Caco-2 (cell line): ENCODE measurements at regions of chr10 and their contacts with region 1.

Region 1: DNA sequence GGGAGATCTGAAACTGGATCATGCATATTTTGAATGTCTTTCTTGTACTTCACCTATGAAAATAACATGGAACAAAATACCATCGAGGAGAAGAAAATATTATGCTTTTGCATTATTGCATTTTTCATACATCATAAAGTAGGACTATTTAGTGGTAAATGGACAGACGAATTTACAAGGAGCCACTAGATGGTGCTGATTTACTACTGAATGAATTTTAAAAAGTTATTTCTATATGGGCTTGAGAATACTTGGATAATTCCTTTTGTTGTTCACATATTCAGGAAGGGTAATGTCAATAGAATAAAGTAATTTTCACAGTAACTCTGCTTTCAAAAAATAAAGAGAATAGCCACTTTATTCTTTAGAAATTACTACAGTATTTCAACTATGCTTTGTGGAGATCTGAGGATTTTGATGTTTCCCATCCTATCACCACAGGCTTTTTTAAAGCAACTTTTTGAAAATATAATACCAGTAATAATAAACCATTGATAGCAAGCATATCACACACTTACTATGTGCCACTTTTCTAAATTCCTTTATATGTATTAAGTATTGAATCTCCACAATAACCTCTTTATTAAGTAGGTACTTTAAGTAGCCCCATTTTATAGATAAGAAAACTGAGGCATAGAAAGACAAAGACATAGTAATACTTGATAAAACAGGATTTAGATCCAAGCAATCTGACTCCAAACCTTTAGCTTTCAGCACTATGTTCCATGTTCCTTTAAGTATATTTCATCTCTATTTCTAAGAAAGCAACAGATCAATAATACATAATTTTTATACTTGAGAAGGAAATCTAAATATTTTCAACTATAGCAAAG is 38.6 kb downstream of the NEBL start:
- DNase-seq: peak in 1 of 2 experiments; percentile 35
- H3K4me3 ChIP-seq: no peak overlapping the region
- H3K4me3 Mint-ChIP-seq: no peak overlapping the region
- H3K27ac Mint-ChIP-seq: no peak overlapping the region
- H3K4me1 ChIP-seq: no peaks in the 10 kb centered on the region
- H3K4me1 Mint-ChIP-seq: no peaks in the 10 kb centered on the region
- H3K27me3 ChIP-seq: no peaks in the 10 kb centered on the region
- H3K27me3 Mint-ChIP-seq: no peaks in the 10 kb centered on the region
- CTCF ChIP-seq: peak; percentile 55 to 68

Region 2: GRCh38 chr10:19412531-19412930 is 1446.0 kb before region 1 on chr10:
- CTCF ChIA-PET with region 1: no interaction called
- POLR2A ChIA-PET with region 1: no interaction called
- intact Hi-C with region 1: loop called (anchors 5 kb)
- DNase-seq: peak in 1 of 2 experiments; percentile 30
- H3K4me3 ChIP-seq: no peak overlapping the region
- H3K4me3 Mint-ChIP-seq: no peak overlapping the region
- H3K27ac Mint-ChIP-seq: no peak overlapping the region
- H3K4me1 ChIP-seq: no peaks in the 10 kb centered on the region
- H3K4me1 Mint-ChIP-seq: no peaks in the 10 kb centered on the region
- H3K27me3 ChIP-seq: no peaks in the 10 kb centered on the region
- H3K27me3 Mint-ChIP-seq: no peaks in the 10 kb centered on the region
- CTCF ChIP-seq: peak; percentile 28 to 53

Region 3: GRCh38 chr10:19819419-19820033 is 1039.0 kb before region 1 on chr10:
- CTCF ChIA-PET with region 1: no interaction called
- POLR2A ChIA-PET with region 1: no interaction called
- intact Hi-C with region 1: loop called (anchors 1 kb)
- DNase-seq: peak in 1 of 2 experiments; percentile 52
- H3K4me3 ChIP-seq: no peak overlapping the region
- H3K4me3 Mint-ChIP-seq: no peak overlapping the region
- H3K27ac Mint-ChIP-seq: no peak overlapping the region
- H3K4me1 ChIP-seq: no peaks in the 10 kb centered on the region
- H3K4me1 Mint-ChIP-seq: no peaks in the 10 kb centered on the region
- H3K27me3 ChIP-seq: peaks cover 8% of the 10 kb centered on the region
- H3K27me3 Mint-ChIP-seq: peaks cover 17% of the 10 kb centered on the region
- CTCF ChIP-seq: peak; percentile 73 to 83

Region 4: GRCh38 chr10:21020545-21020944 is 162.0 kb after region 1 on chr10:
- CTCF ChIA-PET with region 1: no interaction called
- POLR2A ChIA-PET with region 1: no interaction called
- intact Hi-C with region 1: loop called (anchors 1 kb)
- DNase-seq: peak; percentile 66 to 72
- H3K4me3 ChIP-seq: no peak overlapping the region
- H3K4me3 Mint-ChIP-seq: no peak overlapping the region
- H3K27ac Mint-ChIP-seq: no peak overlapping the region
- H3K4me1 ChIP-seq: no peaks in the 10 kb centered on the region
- H3K4me1 Mint-ChIP-seq: peaks cover 7% of the 10 kb centered on the region
- H3K27me3 ChIP-seq: no peaks in the 10 kb centered on the region
- H3K27me3 Mint-ChIP-seq: no peaks in the 10 kb centered on the region
- CTCF ChIP-seq: peak; percentile 56

Region 5: GRCh38 chr10:21078410-21079329 is 220.2 kb after region 1 on chr10:
- CTCF ChIA-PET with region 1: no interaction called
- POLR2A ChIA-PET with region 1: no interaction called
- intact Hi-C with region 1: loop called (anchors 1 kb)
- DNase-seq: peak; percentile 78 to 84
- H3K4me3 ChIP-seq: no peak overlapping the region
- H3K4me3 Mint-ChIP-seq: no peak overlapping the region
- H3K27ac Mint-ChIP-seq: peak overlapping the region; percentile 23
- H3K4me1 ChIP-seq: 0 out of 2 replicates have a peak, but pooled peaks cover 6% of the 10 kb centered on the region
- H3K4me1 Mint-ChIP-seq: peaks cover 15% of the 10 kb centered on the region
- H3K27me3 ChIP-seq: no peaks in the 10 kb centered on the region
- H3K27me3 Mint-ChIP-seq: no peaks in the 10 kb centered on the region
- CTCF ChIP-seq: peak; percentile 92 to 97

Region 6: DNA sequence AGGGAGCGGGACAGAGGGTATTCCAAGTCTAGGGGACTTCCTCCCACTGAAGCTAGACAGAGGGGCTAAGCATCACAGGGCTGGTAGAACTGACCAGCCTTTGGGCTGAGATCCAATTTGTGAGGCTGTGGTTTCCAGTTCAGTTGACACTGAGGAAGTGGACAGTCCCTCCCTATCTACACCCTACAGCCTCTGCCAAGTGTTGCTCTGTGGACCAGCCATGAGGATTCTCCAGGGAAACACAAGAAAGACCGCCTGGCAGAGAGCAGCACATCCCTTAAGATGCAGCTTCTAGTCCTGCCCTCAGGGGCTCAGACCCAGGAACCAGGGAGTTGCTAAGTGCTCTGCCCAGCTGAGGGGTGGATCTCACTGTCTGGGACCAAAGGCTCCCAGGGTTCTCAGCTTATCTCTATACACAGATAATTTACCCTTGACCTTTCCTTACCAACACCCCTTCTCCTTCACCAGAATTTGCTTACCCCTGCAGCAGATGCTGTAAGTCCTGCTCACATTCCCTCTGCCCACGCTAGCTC is 415.0 kb after region 1 on chr10:
- CTCF ChIA-PET with region 1: no interaction called
- POLR2A ChIA-PET with region 1: no interaction called
- intact Hi-C with region 1: loop called (anchors 1 kb)
- DNase-seq: no peak
- H3K4me3 ChIP-seq: no peak overlapping the region
- H3K4me3 Mint-ChIP-seq: no peak overlapping the region
- H3K27ac Mint-ChIP-seq: no peak overlapping the region
- H3K4me1 ChIP-seq: no peaks in the 10 kb centered on the region
- H3K4me1 Mint-ChIP-seq: peaks cover 10% of the 10 kb centered on the region
- H3K27me3 ChIP-seq: no peaks in the 10 kb centered on the region
- H3K27me3 Mint-ChIP-seq: no peaks in the 10 kb centered on the region
- CTCF ChIP-seq: no peak